Heart right ventricle (tissue), 16 donors: ENCODE measurements at regions of chr5 and their contacts with region 1.

Region 1: DNA sequence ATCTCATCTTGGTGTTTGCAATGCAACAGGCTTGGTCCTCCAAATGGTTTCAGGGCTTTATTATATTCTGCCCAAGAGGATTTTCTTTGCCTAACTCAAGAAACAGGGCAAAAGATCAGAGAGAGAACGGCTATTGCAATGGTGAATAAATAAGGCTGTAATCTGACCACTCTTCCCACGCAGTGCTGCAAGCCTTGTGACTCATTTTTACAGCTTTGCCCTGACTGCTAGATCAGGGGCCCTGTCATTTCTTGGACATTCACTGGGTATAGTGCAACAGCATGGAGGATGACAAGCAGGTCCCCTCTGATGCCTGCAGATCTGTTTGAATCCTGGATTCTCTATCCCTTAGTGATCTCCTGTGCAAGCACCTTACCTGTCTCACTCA is 459.1 kb downstream of the EBF1 start:
- DNase-seq: no peak
- ATAC-seq: no peak
- H3K4me3 ChIP-seq: no peak overlapping the region
- H3K27ac ChIP-seq: no peak overlapping the region
- H3K4me1 ChIP-seq: peaks cover 0 to 24% (median 7%) of the 10 kb centered on the region in 9 donors
- H3K27me3 ChIP-seq: no peaks in the 10 kb centered on the region
- CTCF ChIP-seq: no peak

Region 2: DNA sequence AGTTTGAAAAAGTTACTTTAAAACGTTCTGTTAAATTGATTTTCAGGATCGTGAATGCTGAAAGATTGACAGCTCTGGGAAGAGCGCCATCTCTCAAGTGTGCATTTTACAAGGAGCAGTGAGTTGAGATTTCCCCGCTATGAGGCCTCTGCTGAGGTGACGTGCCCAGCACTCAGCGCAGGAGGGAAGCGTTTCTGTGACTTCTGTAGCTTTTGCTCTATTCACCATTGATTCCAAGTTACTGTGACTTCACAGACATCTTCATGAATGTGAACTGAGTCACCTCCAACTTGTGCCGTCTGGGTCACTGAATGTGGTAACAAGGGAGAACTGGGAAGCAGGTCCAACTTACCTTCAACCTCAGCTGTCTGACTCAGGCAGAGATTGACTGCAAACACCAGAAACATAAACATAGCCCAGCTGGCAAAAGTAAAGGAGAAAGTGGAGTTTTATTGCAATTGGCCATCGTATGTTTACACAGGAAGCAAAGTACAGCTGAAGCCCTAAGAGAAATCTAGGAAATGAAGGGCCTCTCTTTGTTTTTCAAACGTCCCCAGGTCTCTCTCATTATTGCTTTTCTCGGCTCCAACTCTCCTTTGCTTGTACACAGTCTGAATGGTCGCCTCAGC is 352.8 kb before region 1 on chr5:
- intact Hi-C with region 1: no loop called
- DNase-seq: no peak
- ATAC-seq: peak in 2 of 8 donors; percentile 16 to 61
- H3K4me3 ChIP-seq: no peak overlapping the region
- H3K27ac ChIP-seq: peak overlapping the region in 2 of 10 donors; percentile 4 to 15
- H3K4me1 ChIP-seq: peaks cover 0 to 5% (median 0%) of the 10 kb centered on the region in 9 donors
- H3K27me3 ChIP-seq: peaks cover 0 to 3% (median 0%) of the 10 kb centered on the region in 7 donors
- CTCF ChIP-seq: no peak

Region 3: DNA sequence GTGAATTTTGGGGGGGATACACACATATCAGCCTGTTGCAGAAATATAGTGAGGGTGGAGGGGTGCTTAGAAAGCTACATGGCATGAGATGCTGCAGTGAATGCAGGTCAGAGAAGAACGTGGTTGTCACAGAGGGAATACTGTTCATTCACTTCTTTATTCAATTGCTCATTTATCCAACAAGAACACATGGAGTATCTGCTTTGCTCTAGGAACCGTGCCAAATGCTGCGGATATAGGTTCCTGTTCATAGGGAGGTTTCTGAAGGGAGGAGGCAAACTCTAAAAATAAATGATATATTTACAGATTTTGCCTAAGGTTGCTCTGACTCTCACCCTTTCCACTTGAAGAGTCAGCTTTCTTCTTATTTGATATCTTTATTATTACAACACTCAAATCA is 337.3 kb before region 1 on chr5:
- intact Hi-C with region 1: no loop called
- DNase-seq: no peak
- ATAC-seq: no peak
- H3K4me3 ChIP-seq: no peak overlapping the region
- H3K27ac ChIP-seq: no peak overlapping the region
- H3K4me1 ChIP-seq: peaks cover 0 to 19% (median 0%) of the 10 kb centered on the region in 9 donors
- H3K27me3 ChIP-seq: no peaks in the 10 kb centered on the region
- CTCF ChIP-seq: no peak

Region 4: GRCh38 chr5:158560170-158560569 is 80.4 kb before region 1 on chr5:
- intact Hi-C with region 1: no loop called
- DNase-seq: peak; percentile 27 to 36
- ATAC-seq: peak; percentile 28 to 80 (median 63)
- H3K4me3 ChIP-seq: no peak overlapping the region
- H3K27ac ChIP-seq: no peak overlapping the region
- H3K4me1 ChIP-seq: no peaks in the 10 kb centered on the region
- H3K27me3 ChIP-seq: no peaks in the 10 kb centered on the region
- CTCF ChIP-seq: no peak

Region 5: DNA sequence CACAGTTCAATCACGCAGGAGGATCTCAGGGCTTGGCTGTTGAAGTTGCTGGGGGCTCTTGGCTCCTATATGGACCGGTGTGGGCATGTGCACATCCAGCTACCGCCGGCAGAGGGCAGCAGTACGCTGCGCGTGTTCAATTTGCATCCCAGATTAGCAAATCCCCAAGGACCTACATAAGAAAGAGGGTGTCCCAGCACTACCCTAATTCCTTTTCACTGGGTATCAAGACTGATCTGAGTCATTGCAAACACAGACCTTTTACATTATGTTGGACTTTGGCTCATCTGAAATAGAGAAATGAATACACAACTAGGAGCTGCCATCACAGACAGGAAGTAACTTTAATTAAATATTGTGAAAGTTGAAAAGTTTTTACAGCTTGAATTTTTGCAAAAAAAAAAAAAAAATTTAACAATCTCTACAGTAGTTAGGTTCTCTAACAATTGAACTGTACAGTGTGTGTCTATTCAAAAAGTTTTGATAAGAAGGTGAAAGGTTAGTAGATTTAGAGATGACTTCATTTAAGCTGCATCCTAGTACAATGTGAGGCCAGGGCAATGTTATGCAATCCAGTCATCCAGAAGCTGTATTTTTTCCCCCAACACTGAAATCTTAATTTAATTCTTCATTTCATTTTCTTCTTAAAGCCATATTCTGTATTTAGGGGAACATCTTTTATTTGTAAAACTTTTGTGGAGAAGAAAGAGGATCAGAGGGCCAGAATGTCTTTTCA is 55.2 kb after region 1 on chr5:
- intact Hi-C with region 1: no loop called
- DNase-seq: peak; percentile 78 to 79
- ATAC-seq: peak; percentile 70 to 88 (median 82)
- H3K4me3 ChIP-seq: no peak overlapping the region
- H3K27ac ChIP-seq: peak overlapping the region in 7 of 10 donors; percentile 4 to 69 (median 35)
- H3K4me1 ChIP-seq: peaks cover 0 to 62% (median 32%) of the 10 kb centered on the region in 9 donors
- H3K27me3 ChIP-seq: peaks cover 0 to 5% (median 0%) of the 10 kb centered on the region in 7 donors
- CTCF ChIP-seq: peak; percentile 93 to 99 (median 98)

Region 6: DNA sequence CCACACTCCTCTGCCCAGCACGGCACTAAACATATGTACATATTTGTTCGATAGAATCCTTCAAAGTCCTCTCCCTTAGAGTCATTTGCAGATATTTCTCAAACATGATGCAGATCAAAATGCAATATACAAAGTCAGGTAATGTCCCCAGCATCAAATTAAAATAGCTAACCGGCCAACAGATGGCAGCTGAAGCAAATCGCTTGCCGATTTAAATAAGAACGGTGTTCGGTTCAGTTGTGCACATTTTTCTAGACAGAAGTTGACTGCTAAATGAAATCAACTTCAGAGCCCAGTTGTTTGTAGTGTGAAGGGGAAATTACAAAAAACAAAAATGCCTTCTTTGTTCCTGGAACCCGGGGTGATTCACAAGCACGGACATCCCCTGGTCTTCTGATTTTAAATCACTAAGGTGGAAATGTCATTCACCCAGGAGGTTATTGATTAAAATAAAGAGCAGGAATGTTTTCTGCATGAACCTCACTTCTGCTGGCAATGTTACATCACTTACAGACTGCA is 240.0 kb after region 1 on chr5:
- intact Hi-C with region 1: loop called in 1 of 10 experiments (anchors 5 kb)
- DNase-seq: no peak
- ATAC-seq: no peak
- H3K4me3 ChIP-seq: no peak overlapping the region
- H3K27ac ChIP-seq: peak overlapping the region in 1 of 10 donors; percentile 6
- H3K4me1 ChIP-seq: peaks cover 0 to 77% (median 37%) of the 10 kb centered on the region in 9 donors
- H3K27me3 ChIP-seq: peaks cover 0 to 7% (median 0%) of the 10 kb centered on the region in 7 donors
- CTCF ChIP-seq: peak in 2 of 9 donors; percentile 14 to 34